Psoas muscle (tissue), 8 donors: ENCODE measurements at regions of chr18 and their contacts with region 1.

Region 1: DNA sequence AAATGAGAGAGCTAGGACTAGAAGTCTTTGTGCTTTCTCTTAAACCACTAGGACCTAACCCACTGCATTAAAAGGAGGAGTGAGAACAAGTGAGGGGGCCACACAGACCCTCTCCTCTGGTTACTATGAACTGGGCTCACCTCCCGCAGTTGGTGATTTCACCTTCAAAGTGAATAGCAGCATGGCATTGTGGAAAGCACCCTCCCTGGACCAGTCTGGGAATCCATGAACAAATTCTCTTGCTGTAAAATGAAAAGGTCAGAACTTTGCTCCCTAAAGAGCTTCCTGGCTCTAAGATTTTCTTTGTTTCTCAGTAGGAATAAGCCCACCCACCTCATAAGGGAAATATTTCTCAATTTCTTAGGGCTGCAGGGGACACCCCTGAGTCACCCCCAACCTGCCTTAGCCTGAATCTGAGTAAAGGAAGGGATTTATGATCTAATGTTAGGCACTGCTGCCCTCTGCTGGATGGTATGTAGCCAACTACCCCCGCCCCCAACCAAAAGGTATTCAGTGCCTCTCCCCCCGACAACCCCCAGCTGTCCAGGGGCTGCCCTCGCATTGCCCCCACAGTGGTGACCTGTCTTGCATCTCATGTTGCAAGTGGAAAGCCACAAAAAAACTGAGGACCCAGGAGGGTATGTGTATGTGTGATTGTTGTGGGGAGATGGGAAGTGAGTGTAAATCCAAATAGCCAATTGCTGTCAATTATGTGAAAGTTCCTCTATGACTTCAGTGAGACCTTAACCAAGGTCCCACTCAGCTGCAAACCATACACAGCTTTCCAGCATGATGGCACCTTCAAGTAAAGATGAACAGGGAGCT is 230.9 kb upstream of the SLC14A2 start:
- DNase-seq: peak; percentile 29 to 62
- ATAC-seq: peak; percentile 70 to 91 (median 88)
- H3K4me3 ChIP-seq: no peak overlapping the region
- H3K27ac ChIP-seq: no peak overlapping the region
- H3K4me1 ChIP-seq: peaks cover 7% of the 10 kb centered on the region
- H3K27me3 ChIP-seq: no peaks in the 10 kb centered on the region
- CTCF ChIP-seq: peak; percentile 79

Region 2: GRCh38 chr18:44594799-44595467 is 789.4 kb before region 1 on chr18:
- intact Hi-C with region 1: loop called in 1 of 2 experiments (anchors 10 kb)
- DNase-seq: no peak
- ATAC-seq: peak in 2 of 4 donors; percentile 67 to 75
- H3K4me3 ChIP-seq: no peak overlapping the region
- H3K27ac ChIP-seq: no peak overlapping the region
- H3K4me1 ChIP-seq: no peaks in the 10 kb centered on the region
- H3K27me3 ChIP-seq: no peaks in the 10 kb centered on the region
- CTCF ChIP-seq: no peak

Region 3: GRCh38 chr18:44823782-44824181 is 560.6 kb before region 1 on chr18:
- intact Hi-C with region 1: no loop called
- DNase-seq: no peak
- ATAC-seq: no peak
- H3K4me3 ChIP-seq: no peak overlapping the region
- H3K27ac ChIP-seq: no peak overlapping the region
- H3K4me1 ChIP-seq: peaks cover 66% of the 10 kb centered on the region
- H3K27me3 ChIP-seq: no peaks in the 10 kb centered on the region
- CTCF ChIP-seq: no peak

Region 4: GRCh38 chr18:44927127-44927849 is 457.1 kb before region 1 on chr18:
- intact Hi-C with region 1: loop called in 1 of 2 experiments (anchors 10 kb)
- DNase-seq: no peak
- ATAC-seq: peak; percentile 68 to 93 (median 82)
- H3K4me3 ChIP-seq: no peak overlapping the region
- H3K27ac ChIP-seq: peak overlapping the region; percentile 36
- H3K4me1 ChIP-seq: peaks cover 21% of the 10 kb centered on the region
- H3K27me3 ChIP-seq: no peaks in the 10 kb centered on the region
- CTCF ChIP-seq: no peak

Region 5: DNA sequence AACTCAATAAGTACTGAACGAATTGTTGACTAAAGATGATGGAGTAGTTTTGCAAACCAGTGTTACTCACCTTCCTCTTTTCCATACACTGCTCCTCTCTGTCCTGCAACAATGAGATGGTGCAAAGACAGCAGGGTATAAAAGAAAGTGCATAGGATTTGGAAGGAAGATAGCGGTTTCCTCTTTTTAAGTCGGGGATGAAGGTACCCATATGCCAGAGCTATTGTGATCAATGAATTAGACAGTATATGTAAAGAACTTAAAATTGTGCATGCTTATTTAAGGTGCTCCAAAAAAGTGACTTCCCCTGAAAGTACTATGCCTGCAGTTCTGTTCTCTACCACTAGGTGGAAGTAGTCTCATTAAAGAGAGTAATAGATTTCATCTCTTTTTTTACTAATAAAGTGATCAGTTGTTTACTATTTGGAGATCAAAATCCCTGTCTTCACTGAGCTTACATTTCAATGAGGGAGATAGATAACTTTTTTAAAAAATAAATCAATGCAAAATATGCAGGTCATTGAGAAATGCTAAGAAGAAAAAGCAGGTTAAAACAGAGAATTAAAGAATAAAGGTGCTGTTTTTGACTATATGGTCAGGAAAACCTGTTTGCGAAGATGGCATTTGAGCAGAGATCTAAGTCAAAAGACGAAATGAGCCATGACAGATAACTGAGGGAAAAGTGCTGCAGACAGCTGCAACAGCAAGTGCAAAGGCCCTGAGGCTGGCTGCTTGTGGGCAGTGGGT is 108.8 kb before region 1 on chr18:
- intact Hi-C with region 1: loop called (anchors 2 to 5 kb)
- DNase-seq: no peak
- ATAC-seq: no peak
- H3K4me3 ChIP-seq: no peak overlapping the region
- H3K27ac ChIP-seq: no peak overlapping the region
- H3K4me1 ChIP-seq: no peaks in the 10 kb centered on the region
- H3K27me3 ChIP-seq: no peaks in the 10 kb centered on the region
- CTCF ChIP-seq: peak; percentile 84

Region 6: GRCh38 chr18:45330170-45330594 is 54.2 kb before region 1 on chr18:
- intact Hi-C with region 1: loop called in 1 of 2 experiments (anchors 5 kb)
- DNase-seq: peak; percentile 32 to 62
- ATAC-seq: peak; percentile 89 to 94 (median 90)
- H3K4me3 ChIP-seq: no peak overlapping the region
- H3K27ac ChIP-seq: peak overlapping the region; percentile 91
- H3K4me1 ChIP-seq: peaks cover 79% of the 10 kb centered on the region
- H3K27me3 ChIP-seq: no peaks in the 10 kb centered on the region
- CTCF ChIP-seq: no peak

Region 7: GRCh38 chr18:45456090-45457021 is 72.0 kb after region 1 on chr18:
- intact Hi-C with region 1: no loop called
- DNase-seq: peak; percentile 19 to 54
- ATAC-seq: peak in 2 of 4 donors; percentile 50 to 66
- H3K4me3 ChIP-seq: no peak overlapping the region
- H3K27ac ChIP-seq: no peak overlapping the region
- H3K4me1 ChIP-seq: no peaks in the 10 kb centered on the region
- H3K27me3 ChIP-seq: no peaks in the 10 kb centered on the region
- CTCF ChIP-seq: no peak

Region 8: GRCh38 chr18:45690975-45691815 is 306.8 kb after region 1 on chr18:
- intact Hi-C with region 1: no loop called
- DNase-seq: peak; percentile 71 to 78
- ATAC-seq: peak; percentile 75 to 86 (median 76)
- H3K4me3 ChIP-seq: no peak overlapping the region
- H3K27ac ChIP-seq: no peak overlapping the region
- H3K4me1 ChIP-seq: no peaks in the 10 kb centered on the region
- H3K27me3 ChIP-seq: no peaks in the 10 kb centered on the region
- CTCF ChIP-seq: peak; percentile 83